HCT116 (cell line): ENCODE measurements at regions of chr6 and their contacts with region 1.

Region 1: DNA sequence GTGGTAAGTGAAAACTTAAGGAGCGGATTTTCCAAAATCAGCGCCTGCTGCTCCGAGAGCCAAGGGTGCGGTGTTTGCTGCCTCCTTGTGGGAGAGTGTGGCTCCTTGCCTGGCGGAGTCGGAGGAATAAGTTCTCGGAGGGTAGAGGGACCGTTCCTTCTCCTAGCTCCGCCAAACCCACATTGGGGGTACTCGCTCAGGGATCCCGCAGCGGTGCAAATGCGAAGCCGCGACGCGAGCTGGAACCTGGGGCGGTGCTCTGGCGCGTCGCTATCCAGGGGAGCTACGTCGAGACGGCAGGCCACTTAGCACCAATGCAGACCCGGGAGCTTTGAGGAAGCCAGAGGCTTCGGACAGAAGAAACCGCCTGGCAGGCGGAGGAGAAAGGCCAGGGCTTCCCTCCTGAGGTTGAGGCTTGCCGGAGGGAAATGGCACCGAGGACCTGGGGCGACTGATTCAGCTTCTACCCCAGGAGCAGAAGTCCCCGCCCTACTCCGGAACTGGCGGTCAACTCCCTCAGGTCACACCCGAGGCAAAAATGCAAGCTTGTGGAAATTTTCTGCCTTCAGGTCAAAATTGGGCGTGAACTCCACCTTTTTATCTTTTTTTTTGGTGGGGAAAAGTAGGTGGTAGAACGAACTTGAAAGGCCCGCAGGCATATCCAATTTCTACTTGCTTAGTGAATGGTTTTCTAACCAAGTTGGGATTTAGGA is 5.7 kb upstream of the DDX43 start:
- DNase-seq: peak; percentile 70
- ATAC-seq: peak; percentile 85
- H3K4me3 ChIP-seq: peak overlapping the region; percentile 52 to 66
- H3K27ac ChIP-seq: peak overlapping the region; percentile 90
- H3K4me1 ChIP-seq: peaks cover 19 to 39% of the 10 kb centered on the region in 2 experiments
- H3K27me3 ChIP-seq: no peaks in the 10 kb centered on the region
- CTCF ChIP-seq: peak; percentile 53 to 85 (median 75); a peak in 5 of 6 replicates
- POLR2A ChIP-seq: peak; percentile 64
- RAD21 ChIP-seq: peak; percentile 84

Region 2: DNA sequence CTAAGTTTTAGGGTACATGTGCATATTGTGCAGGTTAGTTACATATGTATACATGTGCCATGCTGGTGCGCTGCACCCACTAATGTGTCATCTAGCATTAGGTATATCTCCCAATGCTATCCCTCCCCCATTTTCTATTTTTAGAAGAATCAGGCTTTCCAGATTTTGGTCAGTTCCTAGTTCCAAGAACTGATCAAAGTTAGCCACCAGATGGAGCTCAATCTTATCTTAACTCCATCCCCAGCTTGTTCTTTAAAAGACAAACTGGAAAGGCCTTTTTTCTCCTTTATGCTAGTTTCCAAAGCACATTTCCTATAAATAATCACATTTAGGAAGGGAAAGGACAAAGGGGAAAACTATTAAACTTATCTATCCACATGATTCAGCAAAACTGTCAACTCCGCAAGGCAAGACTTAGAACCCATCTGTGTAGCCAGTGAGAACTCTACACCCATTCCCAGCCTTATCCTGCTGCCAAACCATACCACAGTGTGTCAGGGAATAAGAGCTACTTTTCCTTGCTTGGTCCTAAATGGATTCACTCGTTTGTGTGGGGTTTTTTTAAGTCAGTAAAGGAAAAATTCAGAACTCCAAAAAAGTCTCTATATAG is 103.2 kb before region 1 on chr6:
- CTCF ChIA-PET with region 1: interaction called, 14 read pairs
- POLR2A ChIA-PET with region 1: interaction called, 3 read pairs
- RAD21 ChIA-PET with region 1: interaction called in 1 of 2 experiments, 6 read pairs
- intact Hi-C with region 1: no loop called
- DNase-seq: peak; percentile 23
- ATAC-seq: peak; percentile 84
- H3K4me3 ChIP-seq: no peak overlapping the region
- H3K27ac ChIP-seq: no peak overlapping the region
- H3K4me1 ChIP-seq: peaks cover 0 to 6% of the 10 kb centered on the region in 2 experiments; a peak in 1 of 4 replicates
- H3K27me3 ChIP-seq: no peaks in the 10 kb centered on the region
- CTCF ChIP-seq: peak; percentile 41 to 56 (median 46); a peak in 5 of 6 replicates
- POLR2A ChIP-seq: no peak
- RAD21 ChIP-seq: peak; percentile 58

Region 3: GRCh38 chr6:73377225-73377624 is 11.7 kb before region 1 on chr6:
- CTCF ChIA-PET with region 1: interaction called, 4 read pairs
- POLR2A ChIA-PET with region 1: interaction called, 10 read pairs
- RAD21 ChIA-PET with region 1: no interaction called
- intact Hi-C with region 1: no loop called
- DNase-seq: no peak
- ATAC-seq: no peak
- H3K4me3 ChIP-seq: no peak overlapping the region
- H3K27ac ChIP-seq: no peak overlapping the region
- H3K4me1 ChIP-seq: peaks cover 0 to under 1% of the 10 kb centered on the region in 2 experiments; a peak in 2 of 4 replicates
- H3K27me3 ChIP-seq: no peaks in the 10 kb centered on the region
- CTCF ChIP-seq: no peak
- POLR2A ChIP-seq: no peak
- RAD21 ChIP-seq: no peak

Region 4: GRCh38 chr6:73435236-73435635 is 46.3 kb after region 1 on chr6:
- CTCF ChIA-PET with region 1: no interaction called
- POLR2A ChIA-PET with region 1: no interaction called
- RAD21 ChIA-PET with region 1: no interaction called
- intact Hi-C with region 1: no loop called
- DNase-seq: no peak
- ATAC-seq: no peak
- H3K4me3 ChIP-seq: no peak overlapping the region
- H3K27ac ChIP-seq: no peak overlapping the region
- H3K4me1 ChIP-seq: no peaks in the 10 kb centered on the region
- H3K27me3 ChIP-seq: no peaks in the 10 kb centered on the region
- CTCF ChIP-seq: no peak
- POLR2A ChIP-seq: no peak
- RAD21 ChIP-seq: no peak